Mammary epithelial cell (primary cell): ENCODE measurements at regions of chr6 and their contacts with region 1.

Region 1: GRCh38 chr6:112029045-112029822 is 24.7 kb upstream of the CCN6 start:
- DNase-seq: peak; percentile 34
- H3K4me3 ChIP-seq: no peak overlapping the region
- H3K27ac ChIP-seq: no peak overlapping the region
- H3K4me1 ChIP-seq: peaks cover 7% of the 10 kb centered on the region
- H3K27me3 ChIP-seq: no peaks in the 10 kb centered on the region
- CTCF ChIP-seq: peak; percentile 78 to 90

Region 2: DNA sequence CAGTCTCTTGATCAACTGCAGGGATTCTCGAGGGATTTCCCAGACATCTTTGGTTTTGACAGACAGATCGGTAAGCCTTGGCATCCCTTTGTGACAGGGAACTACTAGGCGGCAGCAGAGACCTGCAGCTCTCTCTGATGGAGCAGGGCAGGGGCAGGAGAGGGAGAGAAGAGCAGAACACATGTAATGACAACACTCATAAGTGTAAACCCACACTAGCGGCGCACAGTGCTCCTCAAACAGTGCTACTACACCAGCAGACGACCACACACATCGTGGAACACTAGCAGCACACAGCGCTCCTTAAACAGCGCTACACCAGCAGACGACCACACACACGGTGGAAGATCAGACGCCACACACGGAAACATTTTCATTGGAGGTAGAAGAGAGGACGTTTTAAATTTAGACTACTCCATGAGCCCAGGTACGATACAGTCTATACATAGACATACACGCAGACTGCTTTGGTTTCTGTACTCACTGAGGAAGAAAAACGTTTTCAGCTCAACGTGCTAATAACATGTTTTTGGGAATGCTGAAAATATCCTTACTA is 329.0 kb before region 1 on chr6:
- CTCF ChIA-PET with region 1: no interaction called
- dilution Hi-C with region 1: loop called (anchors 10 kb)
- in situ Hi-C with region 1: loop called in 1 of 2 experiments (anchors 5 kb)
- intact Hi-C with region 1: no loop called
- DNase-seq: no peak
- H3K4me3 ChIP-seq: no peak overlapping the region
- H3K27ac ChIP-seq: no peak overlapping the region
- H3K4me1 ChIP-seq: no peaks in the 10 kb centered on the region
- H3K27me3 ChIP-seq: no peaks in the 10 kb centered on the region
- CTCF ChIP-seq: no peak

Region 3: GRCh38 chr6:111709615-111710398 is 319.4 kb before region 1 on chr6:
- CTCF ChIA-PET with region 1: no interaction called
- dilution Hi-C with region 1: loop called (anchors 10 kb)
- in situ Hi-C with region 1: no loop called
- intact Hi-C with region 1: loop called (anchors 1 kb)
- DNase-seq: peak; percentile 54
- H3K4me3 ChIP-seq: peak overlapping the region in 2 of 3 experiments; percentile 11 to 22
- H3K27ac ChIP-seq: peak overlapping the region; percentile 28
- H3K4me1 ChIP-seq: peaks cover 8% of the 10 kb centered on the region
- H3K27me3 ChIP-seq: no peaks in the 10 kb centered on the region
- CTCF ChIP-seq: peak; percentile 56 to 61

Region 4: DNA sequence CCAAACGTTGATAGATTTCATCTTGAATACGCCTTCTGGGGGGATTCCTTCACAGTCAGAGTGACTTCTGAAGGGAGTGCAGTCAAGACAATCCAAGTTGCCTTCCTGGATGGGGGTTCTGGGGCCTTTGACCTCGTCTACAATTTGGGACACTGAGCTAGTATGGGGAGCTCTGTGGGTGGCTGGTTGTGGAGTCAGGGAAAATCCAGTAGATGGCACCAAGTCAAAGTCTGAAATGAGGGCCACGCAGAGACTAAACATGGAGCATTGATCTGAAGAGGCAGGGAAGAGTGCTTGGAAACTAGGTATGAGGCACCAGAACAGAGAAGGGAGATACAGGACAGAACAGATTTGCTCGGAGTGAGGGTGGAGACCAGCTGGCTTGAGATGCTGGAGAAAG is 18.9 kb before region 1 on chr6:
- CTCF ChIA-PET with region 1: no interaction called
- dilution Hi-C with region 1: no loop called
- in situ Hi-C with region 1: no loop called
- intact Hi-C with region 1: loop called (anchors 1 kb)
- DNase-seq: peak; percentile 21
- H3K4me3 ChIP-seq: no peak overlapping the region
- H3K27ac ChIP-seq: no peak overlapping the region
- H3K4me1 ChIP-seq: peaks cover 11% of the 10 kb centered on the region
- H3K27me3 ChIP-seq: no peaks in the 10 kb centered on the region
- CTCF ChIP-seq: peak in 1 of 2 donors; percentile 53